ENCODE measurements at regions of chr17 and their contacts with region 1.

Region 1: GRCh38 chr17:75393523-75394331 is 11.8 kb downstream of the GRB2 start:
- DNase-seq: peak; percentile 91
- ATAC-seq: peak; percentile 96
- H3K4me3 Mint-ChIP-seq: peak overlapping the region; percentile 98
- H3K27ac Mint-ChIP-seq: peak overlapping the region; percentile 67
- H3K4me1 Mint-ChIP-seq: peaks cover 68% of the 10 kb centered on the region
- H3K27me3 Mint-ChIP-seq: no peaks in the 10 kb centered on the region

Region 2: DNA sequence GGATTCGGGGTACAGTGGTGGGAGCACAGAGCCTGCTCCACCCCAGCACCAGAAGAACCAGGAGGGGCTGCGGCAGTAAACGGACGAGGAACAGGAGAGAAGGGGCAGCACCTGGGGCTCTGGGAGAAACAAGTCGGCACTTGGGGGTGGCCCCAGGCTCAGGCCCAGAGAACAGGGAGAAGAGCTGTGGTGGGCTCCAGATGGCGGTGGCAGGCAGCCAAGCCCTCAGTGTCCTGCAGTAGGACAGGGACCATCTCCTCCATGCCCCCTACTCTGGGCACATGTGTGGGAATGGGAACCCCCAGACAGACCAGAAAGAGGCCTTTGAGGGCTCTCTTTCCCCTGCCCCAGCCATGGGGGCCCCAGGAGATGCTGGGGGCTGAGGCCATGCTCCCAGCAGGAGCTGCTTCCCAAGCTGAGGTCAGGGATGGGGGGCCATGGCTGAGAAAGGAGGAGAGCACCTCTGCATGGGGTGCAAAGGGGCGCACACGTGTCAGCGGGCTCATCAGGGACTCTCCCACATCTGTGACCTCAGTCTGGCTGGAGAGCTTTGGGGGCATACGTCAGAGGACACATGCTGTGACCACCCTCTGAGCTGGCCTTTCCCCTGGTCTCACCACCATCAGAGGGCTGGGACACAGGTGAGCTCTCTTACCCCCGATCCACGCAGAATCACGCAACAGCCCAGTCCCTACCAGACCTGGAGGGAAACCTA is 477.4 kb before region 1 on chr17:
- CTCF ChIA-PET with region 1: no interaction called
- DNase-seq: no peak
- ATAC-seq: no peak
- H3K4me3 Mint-ChIP-seq: no peak overlapping the region
- H3K27ac Mint-ChIP-seq: no peak overlapping the region
- H3K4me1 Mint-ChIP-seq: no peaks in the 10 kb centered on the region
- H3K27me3 Mint-ChIP-seq: peaks cover 23% of the 10 kb centered on the region

Region 3: GRCh38 chr17:75325827-75326225 is 67.9 kb before region 1 on chr17:
- CTCF ChIA-PET with region 1: interaction called, 43 read pairs
- DNase-seq: no peak
- ATAC-seq: no peak
- H3K4me3 Mint-ChIP-seq: no peak overlapping the region
- H3K27ac Mint-ChIP-seq: no peak overlapping the region
- H3K4me1 Mint-ChIP-seq: peaks cover 33% of the 10 kb centered on the region
- H3K27me3 Mint-ChIP-seq: no peaks in the 10 kb centered on the region

Region 4: GRCh38 chr17:75405365-75406221 is 11.9 kb after region 1 on chr17 and contains the start of gene GRB2:
- CTCF ChIA-PET with region 1: interaction called, 23 read pairs
- DNase-seq: peak; percentile 100
- ATAC-seq: peak; percentile 89
- H3K4me3 Mint-ChIP-seq: peak within 1 kb of the TSS; percentile 90
- H3K27ac Mint-ChIP-seq: peak within 1 kb of the TSS; percentile 91
- H3K4me1 Mint-ChIP-seq: peaks cover 45% of the 10 kb centered on the region
- H3K27me3 Mint-ChIP-seq: no peaks in the 10 kb centered on the region
- total RNA-seq, gene GRB2: 138 to 179 TPM

Region 5: DNA sequence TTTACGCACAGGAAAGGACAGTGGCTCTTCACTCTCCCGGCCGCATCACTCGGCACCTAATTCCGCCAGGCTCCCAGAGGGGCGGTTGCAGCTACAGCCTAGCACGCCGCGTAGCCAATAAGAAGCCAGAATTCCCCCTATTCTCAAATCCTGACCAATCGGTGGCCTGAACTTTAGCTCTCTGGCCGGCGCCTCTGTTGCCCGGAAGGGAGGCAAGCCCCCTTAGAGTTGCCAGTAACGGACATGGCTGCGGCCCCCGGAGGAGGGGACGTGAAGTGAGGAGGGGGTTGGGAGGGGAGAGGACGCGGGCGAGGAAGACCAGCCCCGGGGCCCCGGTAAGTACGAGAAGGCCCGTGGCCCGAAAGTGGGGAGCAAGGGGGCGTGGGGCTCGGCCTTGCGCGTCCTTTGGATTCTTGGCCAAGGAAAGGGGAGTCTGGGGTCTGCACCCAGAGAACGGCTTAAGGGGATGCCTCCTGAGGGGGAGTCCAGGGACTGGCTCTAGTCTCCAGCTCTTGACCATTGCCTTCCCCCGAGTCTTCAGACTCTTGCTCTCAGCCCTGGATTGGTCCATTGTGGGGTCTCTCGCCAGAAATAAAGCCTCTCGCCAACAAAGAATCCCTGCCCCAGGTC is 62.8 kb after region 1 on chr17 and contains the start of gene TMEM94:
- CTCF ChIA-PET with region 1: no interaction called
- DNase-seq: peak; percentile 96
- ATAC-seq: peak; percentile 99
- H3K4me3 Mint-ChIP-seq: peak within 1 kb of the TSS; percentile 86
- H3K27ac Mint-ChIP-seq: peak within 1 kb of the TSS; percentile 83
- H3K4me1 Mint-ChIP-seq: peaks cover 43% of the 10 kb centered on the region
- H3K27me3 Mint-ChIP-seq: no peaks in the 10 kb centered on the region
- total RNA-seq, gene TMEM94: 83.7 to 106 TPM

Measured in activated CD8-positive, alpha-beta memory T cell treated with anti-CD3 and anti-CD28 coated beads, Interleukin-2, amount 10 ng/mL, durations not matched to agents 7 days and 5 days (primary cell).